CD4-positive, alpha-beta memory T cell (primary cell): ENCODE measurements at regions of chr17 and their contacts with region 1.

Region 1: GRCh38 chr17:8248751-8249607 is at the start of gene PFAS:
- DNase-seq: peak; percentile 94 to 96 (median 94)
- H3K4me3 ChIP-seq: peak within 1 kb of the TSS; percentile 55 to 100
- H3K4me3 Mint-ChIP-seq: peak within 1 kb of the TSS; percentile 96 to 100 (median 98)
- H3K27ac ChIP-seq: peak within 1 kb of the TSS; percentile 98
- H3K27ac Mint-ChIP-seq: peak within 1 kb of the TSS; percentile 99 to 100 (median 100)
- H3K4me1 ChIP-seq: peaks cover 38% of the 10 kb centered on the region
- H3K4me1 Mint-ChIP-seq: peaks cover 33 to 68% (median 42%) of the 10 kb centered on the region in 4 donors
- H3K27me3 ChIP-seq: no peaks in the 10 kb centered on the region
- H3K27me3 Mint-ChIP-seq: peaks cover 0 to 7% of the 10 kb centered on the region in 2 donors
- total RNA-seq, gene PFAS: 23.0 to 29.1 TPM

Region 2: DNA sequence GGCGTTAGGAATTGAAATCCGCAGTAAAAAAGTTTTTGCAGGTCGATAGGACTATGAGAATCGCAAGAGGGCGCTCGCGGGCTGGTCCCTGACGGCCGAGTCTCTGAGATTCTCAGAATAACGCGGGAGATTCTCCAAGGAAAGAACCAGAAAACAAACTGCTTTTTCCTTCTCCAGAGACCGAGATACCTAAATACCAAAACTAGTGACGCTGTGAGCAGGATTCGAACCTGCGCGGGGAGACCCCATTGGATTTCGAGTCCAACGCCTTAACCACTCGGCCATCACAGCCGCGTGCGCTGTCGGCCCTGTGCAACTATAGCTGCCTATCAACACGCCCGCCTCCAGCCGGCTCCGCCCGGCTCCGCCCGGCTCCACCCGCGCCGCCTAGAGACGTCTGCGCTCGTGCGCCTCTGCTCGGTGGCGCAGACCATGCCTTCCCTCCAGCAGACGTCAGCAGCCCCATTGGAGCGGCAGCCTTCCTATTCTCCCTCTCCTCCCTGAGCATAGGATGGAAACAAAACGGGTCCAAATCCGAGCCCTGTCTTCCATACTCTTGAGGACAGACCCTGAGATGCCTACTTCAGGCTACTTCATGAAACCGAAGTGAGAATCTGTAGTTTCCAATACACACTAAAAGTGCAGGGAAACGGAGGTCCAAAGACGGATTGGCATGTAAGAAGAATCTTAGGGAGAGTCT is 110.2 kb before region 1 on chr17:
- CTCF ChIA-PET with region 1: interaction called, 6 read pairs
- POLR2A ChIA-PET with region 1: interaction called, 28 read pairs
- intact Hi-C with region 1: loop called (anchors 1 kb)
- DNase-seq: peak; percentile 95 to 98 (median 96)
- H3K4me3 ChIP-seq: peak overlapping the region; percentile 60 to 74
- H3K4me3 Mint-ChIP-seq: no peak overlapping the region
- H3K27ac ChIP-seq: peak overlapping the region; percentile 78
- H3K27ac Mint-ChIP-seq: no peak overlapping the region
- H3K4me1 ChIP-seq: peaks cover 20% of the 10 kb centered on the region
- H3K4me1 Mint-ChIP-seq: peaks cover 0 to 8% (median 3%) of the 10 kb centered on the region in 4 donors
- H3K27me3 ChIP-seq: no peaks in the 10 kb centered on the region
- H3K27me3 Mint-ChIP-seq: no peaks in the 10 kb centered on the region

Region 3: DNA sequence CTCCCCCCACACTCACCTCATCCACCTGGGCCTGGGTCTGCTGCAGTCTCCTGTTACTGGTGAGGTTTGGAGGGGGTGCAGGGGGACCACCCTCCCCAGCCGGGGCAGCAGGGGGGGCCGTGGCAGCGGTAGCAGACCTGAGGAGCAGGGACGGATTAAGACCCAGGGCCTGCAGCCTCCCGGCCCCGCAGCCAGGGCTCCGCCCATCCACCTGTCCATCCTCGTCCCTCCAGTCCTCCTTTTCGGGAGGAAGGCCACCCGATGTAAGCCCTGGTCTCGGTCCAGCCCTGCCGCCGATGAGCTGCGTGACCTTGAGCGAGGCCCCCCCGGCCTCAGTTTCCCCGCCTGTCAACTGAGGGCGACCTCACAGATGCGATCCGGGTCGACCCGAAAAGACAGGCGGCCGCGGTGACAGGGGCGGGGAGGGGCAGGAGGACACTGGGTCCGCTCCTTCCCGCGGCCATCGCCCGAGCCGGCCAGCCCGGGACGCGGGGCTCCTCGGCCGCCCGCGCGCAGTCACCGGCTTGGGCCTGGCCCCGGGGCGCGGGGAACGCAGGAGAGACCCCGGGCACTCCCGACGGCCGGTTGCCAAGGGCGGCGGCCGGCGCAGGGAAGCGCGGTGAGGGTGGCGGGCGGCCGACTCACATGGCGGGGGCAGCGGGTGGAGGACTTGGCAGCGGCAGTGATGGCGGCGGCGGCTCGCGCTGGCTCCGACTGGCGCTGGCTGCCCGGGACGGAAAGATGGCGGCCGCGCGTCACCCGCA is 86.6 kb before region 1 on chr17 and contains the start of gene VAMP2:
- CTCF ChIA-PET with region 1: interaction called, 6 read pairs
- POLR2A ChIA-PET with region 1: interaction called, 70 read pairs
- intact Hi-C with region 1: loop called (anchors 5 kb)
- DNase-seq: peak; percentile 84 to 90 (median 89)
- H3K4me3 ChIP-seq: peak within 1 kb of the TSS; percentile 80 to 98
- H3K4me3 Mint-ChIP-seq: peak within 1 kb of the TSS; percentile 91 to 93 (median 91)
- H3K27ac ChIP-seq: peak within 1 kb of the TSS; percentile 100
- H3K27ac Mint-ChIP-seq: peak within 1 kb of the TSS; percentile 95 to 99 (median 98)
- H3K4me1 ChIP-seq: peaks cover 68% of the 10 kb centered on the region
- H3K4me1 Mint-ChIP-seq: peaks cover 47 to 66% (median 53%) of the 10 kb centered on the region in 4 donors
- H3K27me3 ChIP-seq: no peaks in the 10 kb centered on the region
- H3K27me3 Mint-ChIP-seq: no peaks in the 10 kb centered on the region
- total RNA-seq, gene VAMP2: 190 to 203 TPM

Region 4: DNA sequence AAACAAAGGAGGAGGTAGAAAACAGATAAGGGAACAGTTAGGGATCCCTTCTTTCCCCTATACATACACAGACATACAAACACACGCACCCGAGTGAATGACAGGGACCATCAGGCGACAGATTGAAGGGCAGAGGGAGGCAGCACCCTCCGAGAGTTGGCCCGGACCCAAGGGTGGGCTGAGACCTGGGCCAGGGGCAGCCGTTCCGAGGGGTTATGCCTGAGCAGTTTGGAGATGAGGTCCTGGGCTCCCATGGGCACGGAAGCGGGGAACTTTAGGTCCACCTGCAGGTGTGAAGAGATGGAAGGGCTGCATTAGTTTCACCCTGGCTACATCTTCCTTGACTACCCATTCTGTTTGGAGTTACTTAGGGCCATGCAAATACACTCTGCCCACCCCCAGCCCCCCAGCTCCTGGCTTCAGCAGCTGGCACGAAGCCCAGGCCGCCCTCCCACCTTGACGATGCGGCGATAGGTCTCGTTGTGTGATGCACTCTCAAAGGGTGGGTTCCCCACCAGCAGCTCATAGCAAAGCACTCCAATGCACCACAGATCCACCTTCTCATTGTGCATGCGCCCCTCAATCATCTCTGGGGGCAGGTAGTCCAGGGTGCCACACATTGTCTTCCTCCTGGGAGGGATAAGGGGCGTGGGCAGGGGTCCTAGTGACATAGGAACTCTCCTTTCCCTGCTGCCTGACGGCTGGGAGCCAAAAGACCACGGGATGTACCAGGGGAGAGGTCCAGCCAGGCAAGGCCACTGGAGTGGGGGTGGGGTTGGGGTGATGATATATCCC is 44.0 kb before region 1 on chr17:
- CTCF ChIA-PET with region 1: interaction called, 3 read pairs
- POLR2A ChIA-PET with region 1: interaction called, 30 read pairs
- intact Hi-C with region 1: no loop called
- DNase-seq: no peak
- H3K4me3 ChIP-seq: no peak overlapping the region
- H3K4me3 Mint-ChIP-seq: no peak overlapping the region
- H3K27ac ChIP-seq: no peak overlapping the region
- H3K27ac Mint-ChIP-seq: peak overlapping the region in 2 of 7 donors; percentile 9 to 43
- H3K4me1 ChIP-seq: peaks cover 9% of the 10 kb centered on the region
- H3K4me1 Mint-ChIP-seq: peaks cover 7 to 8% (median 7%) of the 10 kb centered on the region in 4 donors
- H3K27me3 ChIP-seq: no peaks in the 10 kb centered on the region
- H3K27me3 Mint-ChIP-seq: peaks cover 0 to 1% of the 10 kb centered on the region in 2 donors

Region 5: DNA sequence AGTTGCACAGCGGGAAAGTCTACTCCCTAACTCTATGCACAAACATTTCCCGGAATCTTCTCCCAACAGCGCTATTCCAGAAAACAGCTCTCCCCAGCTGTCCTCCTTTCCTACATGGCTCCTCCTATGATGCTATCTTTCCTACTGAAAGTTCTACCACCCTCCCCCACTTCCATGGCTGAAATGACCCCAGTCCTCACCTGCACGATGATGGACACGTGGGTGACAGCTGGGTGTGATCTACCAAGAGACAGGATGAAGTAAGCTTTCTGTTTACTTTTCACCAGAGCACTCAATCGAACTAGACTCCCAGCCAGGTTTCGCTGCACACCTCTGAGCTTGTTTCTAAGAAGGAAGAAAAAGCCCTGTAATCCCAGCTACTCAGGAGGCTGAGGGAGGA is 11.8 kb before region 1 on chr17:
- CTCF ChIA-PET with region 1: interaction called, 7 read pairs
- POLR2A ChIA-PET with region 1: interaction called, 611 read pairs
- intact Hi-C with region 1: no loop called
- DNase-seq: no peak
- H3K4me3 ChIP-seq: no peak overlapping the region
- H3K4me3 Mint-ChIP-seq: no peak overlapping the region
- H3K27ac ChIP-seq: no peak overlapping the region
- H3K27ac Mint-ChIP-seq: peak overlapping the region in 2 of 7 donors; percentile 64 to 79
- H3K4me1 ChIP-seq: peaks cover 16% of the 10 kb centered on the region
- H3K4me1 Mint-ChIP-seq: peaks cover 21 to 37% (median 28%) of the 10 kb centered on the region in 4 donors
- H3K27me3 ChIP-seq: no peaks in the 10 kb centered on the region
- H3K27me3 Mint-ChIP-seq: no peaks in the 10 kb centered on the region

Region 6: GRCh38 chr17:8273884-8274444 is 25.0 kb after region 1 on chr17:
- CTCF ChIA-PET with region 1: no interaction called
- POLR2A ChIA-PET with region 1: no interaction called
- intact Hi-C with region 1: no loop called
- DNase-seq: no peak
- H3K4me3 ChIP-seq: no peak overlapping the region
- H3K4me3 Mint-ChIP-seq: no peak overlapping the region
- H3K27ac ChIP-seq: no peak overlapping the region
- H3K27ac Mint-ChIP-seq: peak overlapping the region in 1 of 7 donors; percentile 86
- H3K4me1 ChIP-seq: no peaks in the 10 kb centered on the region
- H3K4me1 Mint-ChIP-seq: no peaks in the 10 kb centered on the region
- H3K27me3 ChIP-seq: no peaks in the 10 kb centered on the region
- H3K27me3 Mint-ChIP-seq: no peaks in the 10 kb centered on the region

Region 7: GRCh38 chr17:8294814-8295316 is 45.9 kb after region 1 on chr17:
- CTCF ChIA-PET with region 1: interaction called, 116 read pairs
- POLR2A ChIA-PET with region 1: interaction called, 100 read pairs
- intact Hi-C with region 1: loop called (anchors 1 kb)
- DNase-seq: no peak
- H3K4me3 ChIP-seq: peak overlapping the region; percentile 78 to 92
- H3K4me3 Mint-ChIP-seq: peak overlapping the region; percentile 91 to 97 (median 94)
- H3K27ac ChIP-seq: peak overlapping the region; percentile 73
- H3K27ac Mint-ChIP-seq: peak overlapping the region; percentile 92 to 98 (median 96)
- H3K4me1 ChIP-seq: peaks cover 26% of the 10 kb centered on the region
- H3K4me1 Mint-ChIP-seq: peaks cover 18 to 50% (median 29%) of the 10 kb centered on the region in 4 donors
- H3K27me3 ChIP-seq: no peaks in the 10 kb centered on the region
- H3K27me3 Mint-ChIP-seq: no peaks in the 10 kb centered on the region

Region 8: GRCh38 chr17:8314797-8315763 is 66.1 kb after region 1 on chr17:
- CTCF ChIA-PET with region 1: no interaction called
- POLR2A ChIA-PET with region 1: no interaction called
- intact Hi-C with region 1: no loop called
- DNase-seq: no peak
- H3K4me3 ChIP-seq: no peak overlapping the region
- H3K4me3 Mint-ChIP-seq: no peak overlapping the region
- H3K27ac ChIP-seq: no peak overlapping the region
- H3K27ac Mint-ChIP-seq: no peak overlapping the region
- H3K4me1 ChIP-seq: no peaks in the 10 kb centered on the region
- H3K4me1 Mint-ChIP-seq: peaks cover 0 to 2% (median 0%) of the 10 kb centered on the region in 4 donors
- H3K27me3 ChIP-seq: no peaks in the 10 kb centered on the region
- H3K27me3 Mint-ChIP-seq: peaks cover 7 to 18% of the 10 kb centered on the region in 2 donors